GM10248 (cell line): ENCODE measurements at regions of chr13 and their contacts with region 1.

Region 1: DNA sequence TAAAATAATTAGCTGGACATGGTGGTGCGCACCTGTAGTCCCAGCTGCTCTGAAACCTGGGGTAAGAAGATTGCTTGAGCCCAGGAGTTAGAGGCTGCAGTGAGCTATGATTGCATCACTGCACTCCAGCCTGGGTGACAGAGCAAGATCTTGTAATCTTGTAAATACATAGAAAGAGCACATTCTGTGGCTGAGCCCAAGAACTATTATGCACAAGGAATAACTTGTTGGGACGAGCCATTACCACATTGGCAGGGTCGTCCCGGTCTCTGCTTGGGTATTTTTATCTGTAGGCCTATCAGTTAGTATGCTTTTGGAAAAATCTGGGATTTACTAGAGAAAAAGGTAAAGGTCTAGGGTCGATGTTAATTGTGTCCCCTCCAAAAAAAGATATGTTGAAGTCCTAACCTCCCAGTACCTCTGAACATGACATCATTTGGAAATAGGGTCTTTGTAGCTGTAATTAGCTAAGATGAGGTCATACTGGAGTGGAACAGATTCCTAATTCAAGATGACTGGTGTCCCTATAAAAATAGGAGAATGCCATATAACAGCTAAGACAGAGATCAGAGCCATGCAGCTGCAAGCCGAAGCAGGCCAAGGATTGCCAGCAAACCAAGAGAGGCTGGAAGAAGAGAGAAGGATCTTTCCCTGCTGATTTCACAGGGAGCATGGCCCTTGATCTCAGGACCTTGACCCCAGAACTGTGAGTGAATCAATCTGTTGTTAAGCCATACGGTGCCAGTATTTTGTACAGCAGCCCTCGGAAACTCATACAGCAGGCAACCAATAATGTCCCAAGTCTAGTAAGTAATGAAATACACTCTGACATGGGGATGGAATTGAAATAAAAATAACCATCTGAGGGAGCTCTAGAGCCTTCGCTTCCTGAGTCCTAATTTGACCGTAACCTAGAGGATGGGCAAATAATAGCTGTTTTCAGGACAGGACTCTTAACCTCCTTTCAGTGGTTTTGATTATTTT is 77.0 kb downstream of the TM9SF2 start:
- DNase-seq: no peak
- CTCF ChIP-seq: peak; percentile 14

Region 2: GRCh38 chr13:99558570-99559180 is 19.6 kb before region 1 on chr13:
- CTCF ChIA-PET with region 1: interaction called, 12 read pairs
- POLR2A ChIA-PET with region 1: no interaction called
- DNase-seq: no peak
- CTCF ChIP-seq: no peak

Region 3: DNA sequence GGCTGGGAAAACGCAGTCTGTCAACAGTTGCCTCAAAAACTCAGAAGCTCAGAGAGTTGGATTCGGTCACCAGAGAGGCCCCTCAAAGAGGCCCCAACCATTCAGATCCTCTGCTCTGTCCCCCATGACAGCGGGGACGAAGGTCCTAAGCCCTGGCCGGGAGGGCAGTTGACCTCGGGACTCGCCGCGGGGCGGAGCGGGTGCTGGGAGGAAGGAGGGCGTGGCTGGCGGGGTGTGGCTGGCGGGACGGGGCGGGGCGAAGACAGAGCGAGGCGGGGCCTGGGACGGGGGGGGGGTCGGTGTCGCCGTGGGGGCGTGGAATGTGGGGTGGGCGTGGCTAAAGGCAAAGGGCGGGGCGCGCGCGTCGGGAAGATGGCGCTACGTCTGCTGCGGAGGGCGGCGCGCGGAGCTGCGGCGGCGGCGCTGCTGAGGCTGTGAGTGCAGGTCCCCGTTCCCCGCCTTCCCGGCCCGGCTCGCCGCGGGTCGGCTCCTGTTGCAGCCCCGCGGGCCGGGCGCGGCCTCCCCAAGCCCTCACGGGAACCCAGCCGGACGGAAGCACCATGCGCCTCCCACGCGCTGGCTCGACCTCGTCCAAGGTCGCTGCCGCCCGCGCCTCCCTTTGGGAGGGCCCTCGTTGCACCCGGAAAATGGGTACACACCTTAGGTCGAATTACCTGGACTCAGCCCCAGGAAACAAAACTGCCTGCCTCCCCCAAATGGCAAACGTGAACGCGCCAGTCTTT is 28.3 kb after region 1 on chr13:
- CTCF ChIA-PET with region 1: interaction called, 11 read pairs
- POLR2A ChIA-PET with region 1: no interaction called
- DNase-seq: peak; percentile 97
- CTCF ChIP-seq: no peak